MCF 10A (cell line): ENCODE measurements at regions of chr7 and their contacts with region 1.

Region 1: GRCh38 chr7:106216517-106216922 is 68.3 kb downstream of the NAMPT start:
- DNase-seq: peak; percentile 98
- H3K4me3 Mint-ChIP-seq: peak overlapping the region; percentile 66
- H3K27ac Mint-ChIP-seq: peak overlapping the region; percentile 82
- H3K4me1 Mint-ChIP-seq: peaks cover 36% of the 10 kb centered on the region
- H3K27me3 Mint-ChIP-seq: no peaks in the 10 kb centered on the region
- CTCF ChIP-seq: no peak

Region 2: GRCh38 chr7:104900525-104901239 is 1315.8 kb before region 1 on chr7:
- CTCF ChIA-PET with region 1: no interaction called
- POLR2A ChIA-PET with region 1: no interaction called
- intact Hi-C with region 1: no loop called
- DNase-seq: no peak
- H3K4me3 Mint-ChIP-seq: no peak overlapping the region
- H3K27ac Mint-ChIP-seq: no peak overlapping the region
- H3K4me1 Mint-ChIP-seq: no peaks in the 10 kb centered on the region
- H3K27me3 Mint-ChIP-seq: peaks cover 2% of the 10 kb centered on the region
- CTCF ChIP-seq: no peak

Region 3: GRCh38 chr7:105853931-105854419 is 362.5 kb before region 1 on chr7:
- CTCF ChIA-PET with region 1: no interaction called
- POLR2A ChIA-PET with region 1: no interaction called
- intact Hi-C with region 1: no loop called
- DNase-seq: no peak
- H3K4me3 Mint-ChIP-seq: no peak overlapping the region
- H3K27ac Mint-ChIP-seq: no peak overlapping the region
- H3K4me1 Mint-ChIP-seq: no peaks in the 10 kb centered on the region
- H3K27me3 Mint-ChIP-seq: no peaks in the 10 kb centered on the region
- CTCF ChIP-seq: no peak

Region 4: GRCh38 chr7:106196460-106197021 is 20.0 kb before region 1 on chr7:
- CTCF ChIA-PET with region 1: interaction called, 3 read pairs
- POLR2A ChIA-PET with region 1: interaction called, 13 read pairs
- intact Hi-C with region 1: no loop called
- DNase-seq: peak; percentile 17
- H3K4me3 Mint-ChIP-seq: no peak overlapping the region
- H3K27ac Mint-ChIP-seq: no peak overlapping the region
- H3K4me1 Mint-ChIP-seq: no peaks in the 10 kb centered on the region
- H3K27me3 Mint-ChIP-seq: no peaks in the 10 kb centered on the region
- CTCF ChIP-seq: no peak

Region 5: DNA sequence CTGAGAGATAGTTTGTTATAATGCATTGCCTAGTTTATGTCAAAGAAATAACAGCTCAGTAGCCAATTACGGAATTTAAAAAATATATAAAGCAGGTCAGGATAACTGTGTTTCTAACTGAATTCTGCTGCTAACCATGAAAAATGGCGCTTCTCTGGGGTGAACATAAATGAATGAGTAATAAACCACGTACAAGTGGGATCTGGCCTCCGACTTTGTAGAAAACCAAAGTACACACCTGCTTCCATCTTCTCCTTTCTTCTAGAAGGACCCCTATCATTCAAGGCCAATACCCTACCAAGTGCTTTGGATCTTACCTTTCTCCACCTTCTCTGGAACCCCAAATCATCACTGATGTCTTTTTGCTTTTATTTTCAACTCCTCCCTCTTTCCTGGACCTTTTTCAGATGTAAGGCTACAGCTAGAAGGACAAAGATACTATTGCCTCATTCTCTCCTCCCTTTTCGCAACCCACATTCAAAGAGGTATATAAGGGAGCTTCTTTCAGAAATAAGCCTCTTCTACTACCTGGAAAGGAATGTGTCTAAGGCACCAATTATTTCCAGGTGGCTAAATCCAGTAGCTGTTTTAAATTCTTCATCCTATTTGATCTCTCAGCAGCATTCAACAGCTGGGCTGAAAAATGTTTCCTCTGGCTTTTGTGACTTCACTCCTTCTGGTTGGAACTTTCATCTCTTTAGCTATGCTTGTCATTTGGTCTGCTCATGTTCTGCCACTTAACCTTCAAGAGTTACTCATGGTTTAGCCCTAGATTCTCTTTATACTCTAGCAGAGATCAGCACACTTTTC is 30.6 kb after region 1 on chr7:
- CTCF ChIA-PET with region 1: no interaction called
- POLR2A ChIA-PET with region 1: interaction called, 21 read pairs
- intact Hi-C with region 1: no loop called
- DNase-seq: peak; percentile 29
- H3K4me3 Mint-ChIP-seq: no peak overlapping the region
- H3K27ac Mint-ChIP-seq: peak overlapping the region; percentile 2
- H3K4me1 Mint-ChIP-seq: peaks cover 10% of the 10 kb centered on the region
- H3K27me3 Mint-ChIP-seq: no peaks in the 10 kb centered on the region
- CTCF ChIP-seq: no peak

Region 6: GRCh38 chr7:106367018-106367420 is 150.5 kb after region 1 on chr7:
- CTCF ChIA-PET with region 1: no interaction called
- POLR2A ChIA-PET with region 1: no interaction called
- intact Hi-C with region 1: no loop called
- DNase-seq: peak; percentile 46
- H3K4me3 Mint-ChIP-seq: no peak overlapping the region
- H3K27ac Mint-ChIP-seq: no peak overlapping the region
- H3K4me1 Mint-ChIP-seq: peaks cover 7% of the 10 kb centered on the region
- H3K27me3 Mint-ChIP-seq: no peaks in the 10 kb centered on the region
- CTCF ChIP-seq: peak; percentile 21

Region 7: DNA sequence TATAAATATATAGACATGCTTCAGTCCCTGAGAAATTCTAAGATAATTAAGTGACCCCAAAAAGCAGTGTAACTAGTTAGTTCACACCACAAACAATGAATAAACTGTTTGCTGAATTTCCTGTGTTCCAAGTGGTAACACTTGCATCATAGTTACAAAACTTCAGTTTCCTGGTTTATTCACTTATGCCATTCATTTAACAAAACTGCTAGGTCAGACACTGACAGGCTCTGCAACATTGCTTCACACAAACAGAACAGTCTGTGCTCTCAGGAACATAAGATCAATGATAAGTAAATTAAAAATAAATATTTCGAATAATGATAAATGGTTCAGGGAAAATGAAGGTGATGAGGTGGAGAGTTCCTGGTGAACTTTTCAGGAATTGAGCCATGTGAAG is 201.6 kb after region 1 on chr7:
- CTCF ChIA-PET with region 1: interaction called, 3 read pairs
- POLR2A ChIA-PET with region 1: interaction called, 10 read pairs
- intact Hi-C with region 1: no loop called
- DNase-seq: peak; percentile 77
- H3K4me3 Mint-ChIP-seq: no peak overlapping the region
- H3K27ac Mint-ChIP-seq: peak overlapping the region; percentile 89
- H3K4me1 Mint-ChIP-seq: peaks cover 43% of the 10 kb centered on the region
- H3K27me3 Mint-ChIP-seq: no peaks in the 10 kb centered on the region
- CTCF ChIP-seq: no peak

Region 8: DNA sequence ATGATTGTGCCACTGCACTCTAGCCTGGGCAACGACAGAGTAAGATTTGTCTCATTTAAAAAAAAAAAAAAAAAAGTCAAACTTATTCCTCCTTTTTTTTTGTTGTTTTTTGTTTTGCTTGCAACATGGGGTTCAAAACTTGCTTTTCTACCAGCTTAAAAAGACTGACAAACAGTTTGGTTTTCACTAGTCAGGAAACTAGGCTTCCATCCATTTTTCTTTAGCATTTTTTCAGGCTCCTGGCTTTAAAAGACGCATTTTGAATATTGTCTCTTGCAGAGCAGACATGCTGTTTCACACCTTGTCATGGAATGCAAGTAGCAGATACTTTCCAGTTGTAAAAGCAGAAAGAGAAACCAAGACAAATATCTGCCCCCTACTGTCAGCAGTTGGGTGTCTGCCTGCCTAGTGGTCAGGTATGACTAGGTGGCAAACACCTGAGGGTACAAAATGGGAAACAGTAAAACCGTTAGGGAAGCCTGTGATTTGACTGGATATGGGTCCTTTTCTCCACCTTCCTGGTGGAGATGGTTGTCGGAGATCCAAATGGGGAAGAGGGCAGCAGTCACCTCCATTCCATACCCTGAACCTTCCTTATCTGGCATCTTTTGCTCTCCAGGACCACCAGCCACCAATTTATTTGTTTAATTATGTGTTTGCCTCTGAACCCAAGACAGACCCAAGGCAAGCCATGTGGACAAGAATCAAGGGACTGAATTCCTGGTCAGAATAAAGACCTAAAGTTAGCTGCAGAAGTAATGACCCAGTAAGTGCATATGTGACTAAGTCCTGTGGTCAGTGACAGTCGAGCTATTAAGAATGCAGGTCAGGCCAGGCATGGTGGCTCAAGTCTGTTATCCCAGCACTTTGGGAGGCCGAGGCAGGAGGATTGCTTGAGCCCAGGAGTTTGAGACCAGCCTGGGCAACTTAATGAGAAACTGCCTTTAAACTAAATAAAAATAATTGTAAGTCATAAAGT is 304.7 kb after region 1 on chr7:
- CTCF ChIA-PET with region 1: no interaction called
- POLR2A ChIA-PET with region 1: no interaction called
- intact Hi-C with region 1: no loop called
- DNase-seq: peak; percentile 22
- H3K4me3 Mint-ChIP-seq: no peak overlapping the region
- H3K27ac Mint-ChIP-seq: no peak overlapping the region
- H3K4me1 Mint-ChIP-seq: no peaks in the 10 kb centered on the region
- H3K27me3 Mint-ChIP-seq: peaks cover 36% of the 10 kb centered on the region
- CTCF ChIP-seq: no peak